Stomach (tissue), 19 donors: ENCODE measurements at regions of chr22 and their contacts with region 1.

Region 1: DNA sequence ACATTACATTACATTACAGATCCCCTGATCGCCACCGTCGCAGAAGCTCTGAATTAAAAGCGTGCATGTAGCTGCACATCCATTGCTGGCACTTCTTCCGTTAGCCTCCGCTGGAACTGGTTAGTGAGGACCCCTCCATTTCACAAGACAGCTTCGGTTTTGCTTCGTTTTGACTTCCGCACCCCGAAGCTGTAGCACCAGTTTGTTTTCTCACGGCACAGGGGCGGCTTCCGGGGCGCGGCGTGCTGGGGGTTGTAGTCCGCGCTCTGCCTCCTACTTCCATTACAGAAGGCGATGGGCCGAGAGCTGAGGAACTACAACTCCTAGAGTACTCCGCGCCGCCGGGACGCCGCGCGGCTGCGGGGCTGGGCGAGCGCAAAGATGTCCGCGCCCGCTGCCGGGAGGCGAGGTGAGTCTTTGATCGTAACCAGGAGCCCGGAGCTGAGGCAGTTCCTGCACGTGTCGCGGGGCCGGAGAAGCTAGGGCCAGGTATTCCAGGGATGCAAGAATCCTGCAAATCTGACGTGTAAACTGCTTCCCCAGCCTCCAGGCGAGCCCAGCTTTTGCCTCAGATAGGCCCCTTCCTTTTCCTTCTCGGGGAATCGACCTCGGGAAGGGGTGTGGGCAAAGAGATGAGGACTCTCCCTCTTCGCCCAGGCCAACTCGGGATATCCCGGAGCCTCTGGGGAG is at the start of gene PEX26:
- DNase-seq: peak; percentile 96 to 99
- H3K4me3 ChIP-seq: peak within 1 kb of the TSS; percentile 73 to 95 (median 85)
- H3K27ac ChIP-seq: peak within 1 kb of the TSS; percentile 82 to 89 (median 89)
- H3K4me1 ChIP-seq: peaks cover 22 to 52% (median 37%) of the 10 kb centered on the region in 4 donors
- H3K27me3 ChIP-seq: no peaks in the 10 kb centered on the region
- CTCF ChIP-seq: no peak
- EP300 ChIP-seq: no peak
- POLR2A ChIP-seq: no peak
- total RNA-seq, gene PEX26: 11.7 to 564 (median 17.9) TPM

Region 2: DNA sequence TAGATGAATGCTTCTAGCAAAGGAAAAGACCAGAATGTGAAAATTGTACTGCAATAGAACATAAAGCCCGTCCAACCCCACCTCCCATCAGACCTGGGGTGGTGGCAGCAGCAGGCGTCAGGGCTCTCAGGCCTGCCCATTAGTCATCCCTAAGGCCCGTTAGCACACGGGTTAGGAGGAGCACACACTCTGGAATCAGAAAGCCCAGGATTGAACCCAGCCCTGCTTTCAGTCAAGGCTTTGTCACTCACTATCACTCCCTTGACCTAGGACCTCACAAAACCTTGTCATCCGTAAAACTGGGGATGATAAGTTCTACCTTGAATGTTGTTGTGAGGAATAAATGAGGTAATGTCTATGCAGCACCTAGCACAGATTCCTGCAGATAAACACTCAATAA is 80.3 kb before region 1 on chr22:
- intact Hi-C with region 1: loop called (anchors 10 kb)
- DNase-seq: no peak
- H3K4me3 ChIP-seq: no peak overlapping the region
- H3K27ac ChIP-seq: no peak overlapping the region
- H3K4me1 ChIP-seq: peaks cover 17 to 63% (median 40%) of the 10 kb centered on the region in 4 donors
- H3K27me3 ChIP-seq: no peaks in the 10 kb centered on the region
- CTCF ChIP-seq: no peak
- EP300 ChIP-seq: no peak
- POLR2A ChIP-seq: no peak

Region 3: DNA sequence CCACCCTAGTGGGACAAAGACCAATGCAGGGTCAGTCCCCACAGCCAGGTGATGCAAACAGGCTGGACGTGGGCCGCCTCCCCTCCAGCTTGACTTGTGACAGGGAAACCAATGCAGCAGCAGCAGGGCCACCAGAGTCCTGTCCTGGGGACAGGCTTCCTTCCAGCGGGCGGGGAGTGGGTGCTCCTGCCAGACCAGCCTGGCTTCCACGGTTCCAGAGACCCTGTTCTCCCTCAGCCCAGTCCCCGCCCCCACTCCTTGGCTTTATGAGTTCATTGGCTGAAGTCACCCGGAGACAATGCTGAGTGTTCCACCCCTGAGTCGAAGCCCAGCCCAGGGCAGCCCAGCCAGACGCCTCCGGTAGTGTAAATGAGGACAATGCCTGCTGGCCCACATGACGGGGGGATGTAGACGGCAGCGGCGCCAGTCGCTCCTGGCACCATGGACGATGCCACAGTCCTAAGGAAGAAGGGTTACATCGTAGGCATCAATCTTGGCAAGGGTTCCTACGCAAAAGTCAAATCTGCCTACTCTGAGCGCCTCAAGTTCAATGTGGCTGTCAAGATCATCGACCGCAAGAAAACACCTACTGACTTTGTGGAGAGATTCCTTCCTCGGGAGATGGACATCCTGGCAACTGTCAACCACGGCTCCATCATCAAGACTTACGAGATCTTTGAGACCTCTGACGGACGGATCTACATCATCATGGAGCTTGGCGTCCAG is 1053.3 kb after region 1 on chr22 and contains the start of gene TSSK2:
- intact Hi-C with region 1: no loop called
- DNase-seq: no peak
- H3K4me3 ChIP-seq: no peak within 1 kb of the TSS
- H3K27ac ChIP-seq: no peak within 1 kb of the TSS
- H3K4me1 ChIP-seq: no peaks in the 10 kb centered on the region
- H3K27me3 ChIP-seq: no peaks in the 10 kb centered on the region
- CTCF ChIP-seq: no peak
- EP300 ChIP-seq: no peak
- POLR2A ChIP-seq: no peak
- total RNA-seq, gene TSSK2: not detected